CD4-positive, alpha-beta memory T cell (primary cell): ENCODE measurements at regions of chr7 and their contacts with region 1.

Region 1: DNA sequence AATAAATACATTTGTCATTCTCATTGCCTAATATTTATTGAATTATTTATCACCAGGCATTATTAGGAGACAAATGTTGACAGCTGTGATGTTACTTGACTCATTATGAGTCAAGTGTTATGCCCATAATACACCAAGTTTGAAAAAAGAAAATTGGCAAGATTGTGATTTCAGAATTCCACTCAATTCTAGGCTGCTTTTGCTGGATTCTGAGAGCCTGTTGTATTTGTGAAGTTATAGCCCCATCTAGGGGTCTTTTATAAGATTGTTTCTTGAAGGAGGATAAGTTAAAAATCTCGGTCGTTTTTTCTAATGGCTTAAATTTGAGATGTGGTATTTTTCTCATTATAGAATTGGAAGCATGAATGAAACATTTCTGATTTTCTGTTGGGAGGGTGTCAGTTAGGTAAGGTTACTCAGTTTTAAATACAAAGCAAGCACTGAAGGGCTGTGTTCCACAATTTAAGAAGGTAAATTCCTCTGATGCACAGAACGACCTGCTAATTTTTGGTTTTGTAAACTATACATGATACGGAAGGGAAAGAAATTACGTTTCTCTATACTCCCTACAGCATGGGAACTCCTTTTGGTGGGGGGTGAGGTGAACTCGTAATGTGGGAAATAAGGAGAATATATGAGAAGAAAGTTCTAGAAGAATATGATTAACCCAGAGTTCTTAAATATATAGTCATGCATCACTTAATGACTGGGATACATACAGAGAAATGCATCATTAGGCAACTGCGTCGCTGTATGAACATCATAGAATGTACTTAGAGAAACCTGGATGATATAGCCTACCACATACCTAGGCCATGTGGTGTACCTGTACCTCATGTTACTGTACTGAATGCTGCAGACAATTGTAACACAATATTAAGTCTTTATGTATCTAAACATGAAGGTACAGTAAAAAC is 2.6 kb downstream of the STK31 start:
- DNase-seq: peak in 4 of 5 donors; percentile 37 to 53 (median 46)
- H3K4me3 ChIP-seq: no peak overlapping the region
- H3K4me3 Mint-ChIP-seq: no peak overlapping the region
- H3K27ac ChIP-seq: no peak overlapping the region
- H3K27ac Mint-ChIP-seq: no peak overlapping the region
- H3K4me1 ChIP-seq: no peaks in the 10 kb centered on the region
- H3K4me1 Mint-ChIP-seq: no peaks in the 10 kb centered on the region
- H3K27me3 ChIP-seq: no peaks in the 10 kb centered on the region
- H3K27me3 Mint-ChIP-seq: no peaks in the 10 kb centered on the region

Region 2: DNA sequence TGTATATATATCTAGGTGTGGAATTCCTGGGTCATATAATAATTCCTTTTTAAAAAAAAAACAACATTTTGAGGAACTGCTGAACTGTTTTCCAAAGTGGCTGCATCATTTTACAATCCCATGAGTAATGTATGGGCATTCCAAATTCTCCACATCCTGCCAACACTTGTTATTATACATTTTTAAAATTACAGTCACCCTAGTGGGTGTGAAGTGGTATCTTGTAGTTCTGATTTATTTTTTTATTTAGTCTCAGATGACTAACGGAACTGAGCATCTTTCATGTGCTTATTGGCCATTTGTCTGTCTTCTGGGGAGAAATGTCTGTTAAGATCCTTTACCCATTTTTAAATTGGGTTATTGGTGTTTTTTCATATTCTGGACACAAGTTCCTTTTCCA is 619.1 kb before region 1 on chr7:
- CTCF ChIA-PET with region 1: no interaction called
- POLR2A ChIA-PET with region 1: no interaction called
- intact Hi-C with region 1: loop called (anchors 10 kb)
- DNase-seq: no peak
- H3K4me3 ChIP-seq: no peak overlapping the region
- H3K4me3 Mint-ChIP-seq: no peak overlapping the region
- H3K27ac ChIP-seq: no peak overlapping the region
- H3K27ac Mint-ChIP-seq: no peak overlapping the region
- H3K4me1 ChIP-seq: no peaks in the 10 kb centered on the region
- H3K4me1 Mint-ChIP-seq: no peaks in the 10 kb centered on the region
- H3K27me3 ChIP-seq: no peaks in the 10 kb centered on the region
- H3K27me3 Mint-ChIP-seq: peaks cover 4 to 8% of the 10 kb centered on the region in 2 donors

Region 3: GRCh38 chr7:23357190-23358093 is 355.2 kb before region 1 on chr7:
- CTCF ChIA-PET with region 1: interaction called, 4 read pairs
- POLR2A ChIA-PET with region 1: no interaction called
- intact Hi-C with region 1: loop called (anchors 5 kb)
- DNase-seq: peak in 3 of 5 donors; percentile 4 to 12 (median 8)
- H3K4me3 ChIP-seq: no peak overlapping the region
- H3K4me3 Mint-ChIP-seq: peak overlapping the region in 2 of 8 donors; percentile 28 to 43
- H3K27ac ChIP-seq: no peak overlapping the region
- H3K27ac Mint-ChIP-seq: peak overlapping the region in 1 of 7 donors; percentile 22
- H3K4me1 ChIP-seq: peaks cover 25% of the 10 kb centered on the region
- H3K4me1 Mint-ChIP-seq: peaks cover 8 to 18% (median 9%) of the 10 kb centered on the region in 4 donors
- H3K27me3 ChIP-seq: no peaks in the 10 kb centered on the region
- H3K27me3 Mint-ChIP-seq: peaks cover 7 to 8% of the 10 kb centered on the region in 2 donors

Region 4: DNA sequence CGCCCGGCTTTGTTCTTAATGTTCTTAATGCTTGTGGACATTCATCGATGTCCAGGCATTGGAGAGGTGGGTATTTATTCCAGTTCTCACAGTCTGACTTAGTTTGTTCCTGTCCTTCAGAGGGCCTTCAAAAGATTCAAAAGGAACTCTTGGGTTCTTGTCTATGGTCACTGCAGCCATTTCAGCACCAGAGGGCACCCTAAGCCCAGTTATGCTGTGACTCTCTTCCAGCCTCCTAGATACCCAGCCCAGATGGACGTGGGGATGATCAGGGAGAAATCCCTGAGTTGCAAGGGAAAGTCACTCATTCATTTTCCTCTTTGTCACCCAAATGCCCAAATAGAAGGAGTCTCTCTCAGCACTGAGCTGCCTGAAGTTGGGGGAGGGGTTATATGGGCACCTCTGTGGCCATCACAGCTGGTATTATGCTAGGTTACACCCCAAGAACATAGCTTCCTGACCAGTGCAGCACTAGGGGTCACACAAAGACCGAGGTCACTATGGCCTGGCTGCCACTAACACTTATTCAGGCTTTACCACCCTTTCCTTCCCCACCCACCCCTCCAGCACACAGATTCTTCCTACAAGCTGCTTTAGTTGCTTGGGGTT is 141.9 kb before region 1 on chr7:
- CTCF ChIA-PET with region 1: interaction called, 58 read pairs
- POLR2A ChIA-PET with region 1: no interaction called
- intact Hi-C with region 1: loop called (anchors 1 kb)
- DNase-seq: peak; percentile 44 to 65 (median 57)
- H3K4me3 ChIP-seq: no peak overlapping the region
- H3K4me3 Mint-ChIP-seq: peak overlapping the region in 2 of 8 donors; percentile 3 to 25
- H3K27ac ChIP-seq: no peak overlapping the region
- H3K27ac Mint-ChIP-seq: peak overlapping the region in 1 of 7 donors; percentile 5
- H3K4me1 ChIP-seq: no peaks in the 10 kb centered on the region
- H3K4me1 Mint-ChIP-seq: peaks cover 0 to 3% (median under 1%) of the 10 kb centered on the region in 4 donors
- H3K27me3 ChIP-seq: no peaks in the 10 kb centered on the region
- H3K27me3 Mint-ChIP-seq: peaks cover 10 to 14% of the 10 kb centered on the region in 2 donors

Region 5: GRCh38 chr7:24665564-24666294 is 953.1 kb after region 1 on chr7:
- CTCF ChIA-PET with region 1: no interaction called
- POLR2A ChIA-PET with region 1: no interaction called
- intact Hi-C with region 1: loop called (anchors 5 kb)
- DNase-seq: peak; percentile 31 to 47 (median 42)
- H3K4me3 ChIP-seq: no peak overlapping the region
- H3K4me3 Mint-ChIP-seq: no peak overlapping the region
- H3K27ac ChIP-seq: no peak overlapping the region
- H3K27ac Mint-ChIP-seq: no peak overlapping the region
- H3K4me1 ChIP-seq: no peaks in the 10 kb centered on the region
- H3K4me1 Mint-ChIP-seq: no peaks in the 10 kb centered on the region
- H3K27me3 ChIP-seq: no peaks in the 10 kb centered on the region
- H3K27me3 Mint-ChIP-seq: no peaks in the 10 kb centered on the region